OCI-LY7 (cell line): ENCODE measurements at regions of chr9 and their contacts with region 1.

Region 1: GRCh38 chr9:34773346-34773745 is 63.4 kb upstream of the CCL21 start:
- DNase-seq: no peak
- H3K4me3 ChIP-seq: no peak overlapping the region
- H3K27ac ChIP-seq: no peak overlapping the region
- H3K4me1 ChIP-seq: no peaks in the 10 kb centered on the region
- CTCF ChIP-seq: no peak

Region 2: GRCh38 chr9:34628656-34629491 is 144.5 kb before region 1 on chr9 and contains the start of gene ARID3C:
- CTCF ChIA-PET with region 1: no interaction called
- POLR2A ChIA-PET with region 1: no interaction called
- intact Hi-C with region 1: no loop called
- DNase-seq: no peak
- H3K4me3 ChIP-seq: no peak within 1 kb of the TSS
- H3K27ac ChIP-seq: no peak within 1 kb of the TSS
- H3K4me1 ChIP-seq: no peaks in the 10 kb centered on the region
- CTCF ChIP-seq: no peak
- total RNA-seq, gene ARID3C: 1.4 and 1.9 TPM in 2 replicates

Region 3: DNA sequence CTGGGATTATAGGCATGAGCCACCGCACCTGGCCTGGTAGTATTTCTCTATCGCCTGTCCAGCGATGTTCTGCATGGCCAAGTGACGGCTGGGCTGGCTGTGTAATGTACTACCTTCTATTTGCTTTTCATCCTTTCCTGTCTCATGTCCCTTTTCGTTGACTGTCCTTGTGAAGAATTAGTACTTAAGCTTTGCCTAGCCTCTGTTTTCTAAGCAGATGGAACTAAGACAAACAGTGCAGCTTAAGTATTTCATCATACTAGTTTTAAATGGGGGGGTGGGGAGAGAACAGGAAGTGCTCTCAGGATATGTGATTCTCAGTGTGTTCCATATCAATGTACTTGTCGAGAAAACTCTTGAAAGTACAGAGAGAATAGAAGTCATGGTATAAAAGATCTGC is 31.7 kb before region 1 on chr9:
- CTCF ChIA-PET with region 1: no interaction called
- POLR2A ChIA-PET with region 1: interaction called, 10 read pairs
- intact Hi-C with region 1: no loop called
- DNase-seq: no peak
- H3K4me3 ChIP-seq: no peak overlapping the region
- H3K27ac ChIP-seq: no peak overlapping the region
- H3K4me1 ChIP-seq: no peaks in the 10 kb centered on the region
- CTCF ChIP-seq: no peak

Region 4: DNA sequence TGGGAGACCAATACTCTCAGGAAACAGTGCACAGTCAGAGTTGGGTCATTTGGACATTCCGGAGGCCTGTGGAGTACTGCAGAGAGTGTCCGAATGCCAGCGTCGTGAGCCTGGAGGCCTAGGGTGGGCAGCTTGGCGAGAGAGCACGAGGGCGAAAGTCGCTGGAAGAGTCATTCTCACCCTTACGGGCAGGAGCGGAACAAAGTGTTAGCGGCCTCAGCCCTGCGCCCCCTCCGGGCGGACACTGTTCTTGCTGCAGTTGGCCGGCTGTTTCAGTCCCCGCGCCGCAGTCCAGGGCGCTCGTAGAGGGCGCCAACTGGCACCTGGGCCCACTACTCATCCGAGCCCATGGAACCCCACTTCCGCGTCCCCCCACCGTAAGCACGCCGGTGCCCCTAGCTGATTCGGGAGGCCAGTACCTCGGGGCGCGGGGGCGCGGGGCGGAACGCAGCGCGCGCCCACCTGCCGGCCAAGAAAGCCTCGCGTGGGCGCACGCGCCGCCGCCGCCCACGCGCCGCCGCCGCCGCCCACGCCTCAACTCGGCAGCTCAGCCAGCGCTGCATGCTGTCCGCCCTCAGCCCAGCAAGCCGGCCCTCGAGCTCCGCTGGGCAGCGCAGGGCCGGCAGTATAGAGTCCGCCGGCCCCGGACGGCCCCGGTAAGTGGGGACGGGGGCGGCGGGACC is 36.3 kb after region 1 on chr9:
- CTCF ChIA-PET with region 1: no interaction called
- POLR2A ChIA-PET with region 1: no interaction called
- intact Hi-C with region 1: no loop called
- DNase-seq: no peak
- H3K4me3 ChIP-seq: no peak overlapping the region
- H3K27ac ChIP-seq: no peak overlapping the region
- H3K4me1 ChIP-seq: no peaks in the 10 kb centered on the region
- CTCF ChIP-seq: no peak